Activated CD8-positive, alpha-beta T cell treated with anti-CD3 and anti-CD28 coated beads, Interleukin-2, amount 10 ng/mL, durations not matched to agents 7 days and 5 days (primary cell): ENCODE measurements at regions of chr3 and their contacts with region 1.

Region 1: DNA sequence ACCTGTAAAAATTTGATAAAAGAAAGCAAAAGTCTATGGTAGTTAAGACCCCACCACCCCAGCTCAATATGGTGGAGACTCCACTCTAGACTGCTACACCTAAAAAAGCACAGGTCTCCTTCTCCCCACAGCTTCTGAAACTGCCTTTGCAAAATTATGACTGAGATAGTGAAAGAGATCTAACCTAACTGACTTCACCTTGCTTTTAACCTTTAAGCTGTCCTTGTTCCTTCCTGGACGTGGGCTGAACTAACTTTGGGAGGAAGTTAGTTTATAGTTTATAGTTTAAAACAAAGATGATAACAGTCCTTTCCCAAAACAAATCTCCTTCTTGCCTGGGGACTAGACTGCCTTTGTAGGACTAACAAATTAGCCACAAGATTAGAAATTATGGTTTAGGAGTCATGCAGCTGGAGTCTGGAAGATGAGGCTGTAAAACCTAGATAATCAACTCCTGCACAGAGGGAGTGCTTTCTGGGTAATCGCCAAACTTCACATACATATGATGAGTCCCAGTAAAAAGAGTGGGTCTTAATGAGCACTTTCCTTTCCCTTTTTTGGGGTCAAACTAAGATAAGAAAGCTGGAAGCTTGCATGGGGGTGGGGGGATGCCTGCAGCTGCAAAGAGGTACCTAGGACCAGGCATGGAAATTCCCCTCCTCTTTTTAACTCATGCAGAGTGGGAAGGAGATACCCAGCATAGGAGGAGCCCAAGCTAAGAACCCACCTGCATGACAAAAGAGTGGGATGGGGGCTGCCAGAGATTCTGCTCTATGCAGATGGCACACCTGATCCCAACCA is 17.5 kb downstream of the CCR8 start:
- DNase-seq: no peak
- ATAC-seq: no peak
- H3K4me3 Mint-ChIP-seq: no peak overlapping the region
- H3K27ac Mint-ChIP-seq: peak overlapping the region; percentile 57
- H3K4me1 Mint-ChIP-seq: peaks cover 42% of the 10 kb centered on the region
- H3K27me3 Mint-ChIP-seq: no peaks in the 10 kb centered on the region

Region 2: GRCh38 chr3:39177708-39178332 is 169.2 kb before region 1 on chr3:
- CTCF ChIA-PET with region 1: no interaction called
- POLR2A ChIA-PET with region 1: no interaction called
- DNase-seq: peak; percentile 75
- ATAC-seq: peak; percentile 51
- H3K4me3 Mint-ChIP-seq: peak overlapping the region; percentile 51
- H3K27ac Mint-ChIP-seq: peak overlapping the region; percentile 73
- H3K4me1 Mint-ChIP-seq: peaks cover 49% of the 10 kb centered on the region
- H3K27me3 Mint-ChIP-seq: peaks cover 4% of the 10 kb centered on the region

Region 3: GRCh38 chr3:39208463-39209055 is 138.4 kb before region 1 on chr3:
- CTCF ChIA-PET with region 1: no interaction called
- POLR2A ChIA-PET with region 1: no interaction called
- DNase-seq: peak; percentile 55
- ATAC-seq: peak; percentile 69
- H3K4me3 Mint-ChIP-seq: no peak overlapping the region
- H3K27ac Mint-ChIP-seq: no peak overlapping the region
- H3K4me1 Mint-ChIP-seq: peaks cover 12% of the 10 kb centered on the region
- H3K27me3 Mint-ChIP-seq: peaks cover 23% of the 10 kb centered on the region

Region 4: GRCh38 chr3:39361252-39361927 is 14.4 kb after region 1 on chr3:
- CTCF ChIA-PET with region 1: interaction called, 11 read pairs
- POLR2A ChIA-PET with region 1: interaction called, 3 read pairs
- DNase-seq: peak; percentile 72
- ATAC-seq: peak; percentile 86
- H3K4me3 Mint-ChIP-seq: peak overlapping the region; percentile 49
- H3K27ac Mint-ChIP-seq: peak overlapping the region; percentile 83
- H3K4me1 Mint-ChIP-seq: peaks cover 59% of the 10 kb centered on the region
- H3K27me3 Mint-ChIP-seq: peaks cover 19% of the 10 kb centered on the region